ENCODE measurements at regions of chr20 and their contacts with region 1.

Region 1: GRCh38 chr20:34302723-34303528 is at the start of gene AHCY:
- DNase-seq: peak; percentile 97
- CTCF ChIP-seq: no peak

Region 2: GRCh38 chr20:34363062-34363464 is 60.1 kb after region 1 on chr20 and contains the start of gene ITCH:
- in situ Hi-C with region 1: no loop called
- DNase-seq: peak; percentile 96
- CTCF ChIP-seq: no peak

Region 3: GRCh38 chr20:34704177-34705007 is 401.5 kb after region 1 on chr20 and contains the start of gene TP53INP2:
- in situ Hi-C with region 1: loop called (anchors 25 kb)
- DNase-seq: peak; percentile 90
- CTCF ChIP-seq: no peak

Measured in GM13977 (cell line).